Activated CD4-positive, alpha-beta T cell treated with anti-CD3 and anti-CD28 coated beads for 36 hours (primary cell): ENCODE measurements at regions of chr10 and their contacts with region 1.

Region 1: GRCh38 chr10:21953585-21954057 is 49.9 kb downstream of the DNAJC1 start:
- DNase-seq: no peak
- ATAC-seq: peak; percentile 98
- H3K4me3 Mint-ChIP-seq: no peak overlapping the region
- H3K27ac Mint-ChIP-seq: no peak overlapping the region
- H3K4me1 Mint-ChIP-seq: peaks cover 7% of the 10 kb centered on the region
- H3K27me3 Mint-ChIP-seq: no peaks in the 10 kb centered on the region

Region 2: GRCh38 chr10:21078410-21079329 is 875.0 kb before region 1 on chr10:
- CTCF ChIA-PET with region 1: no interaction called
- POLR2A ChIA-PET with region 1: no interaction called
- intact Hi-C with region 1: loop called in 1 of 2 experiments (anchors 5 kb)
- DNase-seq: peak; percentile 62
- ATAC-seq: no peak
- H3K4me3 Mint-ChIP-seq: no peak overlapping the region
- H3K27ac Mint-ChIP-seq: no peak overlapping the region
- H3K4me1 Mint-ChIP-seq: no peaks in the 10 kb centered on the region
- H3K27me3 Mint-ChIP-seq: peaks cover 12% of the 10 kb centered on the region

Region 3: DNA sequence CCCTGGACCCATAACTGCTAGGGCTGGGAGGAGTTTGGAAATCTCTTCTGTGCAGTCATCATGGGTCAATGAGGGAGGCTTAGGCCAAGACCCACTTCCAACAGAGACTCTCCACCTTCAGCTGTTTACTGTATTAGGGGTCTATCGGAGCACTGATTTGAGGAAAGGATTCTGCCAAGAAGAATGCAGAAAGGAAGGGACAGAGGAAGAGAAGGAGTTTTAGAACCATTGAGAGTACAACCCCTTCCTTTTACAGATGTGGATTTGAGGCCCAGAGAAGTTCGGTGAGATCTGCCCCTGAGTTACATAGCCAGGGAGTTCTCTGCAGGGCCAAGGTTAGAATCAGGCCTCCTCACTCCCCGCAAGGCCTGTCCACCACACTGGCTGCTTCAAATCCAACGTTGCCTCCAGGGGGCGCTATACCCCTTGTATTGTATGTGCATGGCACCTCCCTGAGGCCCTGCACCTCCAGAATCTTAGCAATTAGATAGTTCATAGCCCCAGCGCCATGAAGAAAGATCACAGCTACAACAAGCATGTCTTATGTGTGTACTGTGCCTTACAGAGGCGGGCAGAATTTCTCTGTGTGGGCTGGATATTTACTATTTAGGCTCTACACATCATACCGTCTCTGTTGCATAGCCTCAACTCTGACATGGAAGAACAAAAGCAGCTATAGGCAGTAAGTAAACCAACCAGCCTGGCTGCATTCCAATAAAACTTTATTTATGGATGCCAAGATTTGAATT is 675.0 kb before region 1 on chr10:
- CTCF ChIA-PET with region 1: no interaction called
- POLR2A ChIA-PET with region 1: no interaction called
- intact Hi-C with region 1: loop called in 1 of 2 experiments (anchors 1 kb)
- DNase-seq: peak; percentile 92
- ATAC-seq: peak; percentile 92
- H3K4me3 Mint-ChIP-seq: no peak overlapping the region
- H3K27ac Mint-ChIP-seq: no peak overlapping the region
- H3K4me1 Mint-ChIP-seq: no peaks in the 10 kb centered on the region
- H3K27me3 Mint-ChIP-seq: peaks cover 2% of the 10 kb centered on the region

Region 4: DNA sequence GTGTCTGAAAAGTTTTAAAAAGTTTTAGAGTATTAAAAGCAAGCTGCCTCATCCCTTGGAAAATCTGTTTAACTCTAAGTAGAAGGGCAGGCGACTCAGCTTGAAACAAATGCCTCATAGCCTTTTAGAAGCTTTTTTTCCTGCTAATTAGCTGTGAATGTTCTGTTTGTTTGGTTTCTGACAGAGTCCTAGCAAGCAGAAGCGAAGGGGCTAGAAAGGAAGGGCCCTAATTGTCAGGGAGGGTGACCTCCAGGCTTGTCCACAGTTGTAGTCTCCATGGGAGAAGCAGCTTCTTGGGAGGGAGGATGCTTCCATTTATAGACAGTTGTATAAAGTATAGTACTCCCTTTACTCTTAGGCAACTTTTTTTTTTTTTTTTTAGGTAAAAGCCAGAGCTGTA is 41.0 kb before region 1 on chr10:
- CTCF ChIA-PET with region 1: no interaction called
- POLR2A ChIA-PET with region 1: no interaction called
- intact Hi-C with region 1: no loop called
- DNase-seq: no peak
- ATAC-seq: peak; percentile 42
- H3K4me3 Mint-ChIP-seq: no peak overlapping the region
- H3K27ac Mint-ChIP-seq: peak overlapping the region; percentile 13
- H3K4me1 Mint-ChIP-seq: peaks cover 17% of the 10 kb centered on the region
- H3K27me3 Mint-ChIP-seq: no peaks in the 10 kb centered on the region